ENCODE measurements at regions of chr7 and their contacts with region 1.

Region 1: GRCh38 chr7:106947244-106947728 is 82.2 kb downstream of the PIK3CG start:
- DNase-seq: peak in 4 of 5 donors; percentile 22 to 40 (median 30)
- H3K4me3 ChIP-seq: no peak overlapping the region
- H3K4me3 Mint-ChIP-seq: no peak overlapping the region
- H3K27ac ChIP-seq: no peak overlapping the region
- H3K27ac Mint-ChIP-seq: no peak overlapping the region
- H3K4me1 ChIP-seq: no peaks in the 10 kb centered on the region
- H3K4me1 Mint-ChIP-seq: no peaks in the 10 kb centered on the region
- H3K27me3 ChIP-seq: no peaks in the 10 kb centered on the region
- H3K27me3 Mint-ChIP-seq: peaks cover 0 to 8% of the 10 kb centered on the region in 2 donors

Region 2: GRCh38 chr7:106715730-106716129 is 231.6 kb before region 1 on chr7:
- CTCF ChIA-PET with region 1: no interaction called
- POLR2A ChIA-PET with region 1: no interaction called
- intact Hi-C with region 1: no loop called
- DNase-seq: no peak
- H3K4me3 ChIP-seq: no peak overlapping the region
- H3K4me3 Mint-ChIP-seq: no peak overlapping the region
- H3K27ac ChIP-seq: no peak overlapping the region
- H3K27ac Mint-ChIP-seq: no peak overlapping the region
- H3K4me1 ChIP-seq: peaks cover 30% of the 10 kb centered on the region
- H3K4me1 Mint-ChIP-seq: peaks cover 0 to 16% (median 12%) of the 10 kb centered on the region in 4 donors
- H3K27me3 ChIP-seq: no peaks in the 10 kb centered on the region
- H3K27me3 Mint-ChIP-seq: peaks cover 0 to 1% of the 10 kb centered on the region in 2 donors

Region 3: GRCh38 chr7:106793015-106793975 is 154.0 kb before region 1 on chr7:
- CTCF ChIA-PET with region 1: interaction called, 3 read pairs
- POLR2A ChIA-PET with region 1: no interaction called
- intact Hi-C with region 1: loop called (anchors 1 kb)
- DNase-seq: peak in 4 of 5 donors; percentile 47 to 52 (median 48)
- H3K4me3 ChIP-seq: no peak overlapping the region
- H3K4me3 Mint-ChIP-seq: no peak overlapping the region
- H3K27ac ChIP-seq: no peak overlapping the region
- H3K27ac Mint-ChIP-seq: no peak overlapping the region
- H3K4me1 ChIP-seq: no peaks in the 10 kb centered on the region
- H3K4me1 Mint-ChIP-seq: peaks cover 0 to 3% (median 0%) of the 10 kb centered on the region in 4 donors
- H3K27me3 ChIP-seq: no peaks in the 10 kb centered on the region
- H3K27me3 Mint-ChIP-seq: peaks cover 2 to 3% of the 10 kb centered on the region in 2 donors

Region 4: GRCh38 chr7:106927536-106927935 is 19.8 kb before region 1 on chr7:
- CTCF ChIA-PET with region 1: no interaction called
- POLR2A ChIA-PET with region 1: no interaction called
- intact Hi-C with region 1: no loop called
- DNase-seq: no peak
- H3K4me3 ChIP-seq: no peak overlapping the region
- H3K4me3 Mint-ChIP-seq: no peak overlapping the region
- H3K27ac ChIP-seq: no peak overlapping the region
- H3K27ac Mint-ChIP-seq: no peak overlapping the region
- H3K4me1 ChIP-seq: no peaks in the 10 kb centered on the region
- H3K4me1 Mint-ChIP-seq: peaks cover 0 to 3% (median 0%) of the 10 kb centered on the region in 4 donors
- H3K27me3 ChIP-seq: no peaks in the 10 kb centered on the region
- H3K27me3 Mint-ChIP-seq: peaks cover 0 to 1% of the 10 kb centered on the region in 2 donors

Measured in CD4-positive, alpha-beta memory T cell (primary cell).